ENCODE measurements at regions of chr9 and their contacts with region 1.

Region 1: DNA sequence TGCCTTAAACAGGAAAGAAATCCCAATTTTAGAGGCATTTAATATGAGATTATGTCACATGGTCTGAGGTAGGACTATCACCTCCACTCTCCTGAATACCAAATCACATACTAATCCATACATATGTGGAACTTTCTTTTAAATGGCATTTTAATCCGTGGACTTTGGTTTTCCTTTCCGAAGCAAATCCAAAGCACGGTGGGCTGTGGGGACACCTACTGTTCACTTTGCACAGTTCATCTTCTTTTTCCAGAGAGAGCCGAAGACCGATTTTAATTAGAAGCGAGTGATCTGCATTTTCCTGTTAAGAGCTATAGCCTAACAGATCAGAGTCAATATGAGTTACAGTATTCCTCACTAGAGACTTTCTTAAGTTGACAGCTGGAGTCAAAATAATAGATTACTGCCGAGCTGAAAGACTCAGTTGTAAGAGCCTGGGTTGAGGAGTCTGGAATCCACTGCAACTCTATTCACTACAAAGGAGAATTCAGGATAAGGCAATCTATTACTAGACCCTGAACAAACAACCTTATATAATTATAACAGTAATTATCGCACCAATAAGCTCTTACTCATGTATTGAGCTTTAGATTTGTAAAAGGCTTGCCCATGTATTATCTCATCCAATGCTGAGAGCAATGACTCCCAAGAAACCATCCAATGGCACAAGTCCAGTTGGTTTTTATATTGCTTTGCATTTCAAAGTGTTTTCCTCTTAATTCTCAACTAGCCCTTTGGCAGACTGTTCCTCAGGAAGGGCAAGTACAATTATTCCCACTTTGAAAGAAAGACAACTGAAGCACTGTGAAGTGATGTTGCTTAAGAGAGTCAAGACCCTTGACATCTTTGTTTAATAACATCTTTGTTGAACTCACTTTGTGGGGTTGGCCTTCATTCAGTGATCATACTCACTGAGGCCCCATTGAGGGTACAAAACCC is 144.7 kb downstream of the TRPM6 start:
- DNase-seq: no peak
- H3K4me3 ChIP-seq: no peak overlapping the region
- CTCF ChIP-seq: peak; percentile 56

Region 2: GRCh38 chr9:73200694-73201452 is 1542.2 kb before region 1 on chr9:
- CTCF ChIA-PET with region 1: interaction called, 29 read pairs
- POLR2A ChIA-PET with region 1: no interaction called
- DNase-seq: no peak
- H3K4me3 ChIP-seq: no peak overlapping the region
- CTCF ChIP-seq: peak; percentile 12

Region 3: GRCh38 chr9:74570879-74571512 is 172.1 kb before region 1 on chr9:
- CTCF ChIA-PET with region 1: interaction called, 10 read pairs
- POLR2A ChIA-PET with region 1: no interaction called
- DNase-seq: no peak
- H3K4me3 ChIP-seq: no peak overlapping the region
- CTCF ChIP-seq: peak; percentile 55

Region 4: DNA sequence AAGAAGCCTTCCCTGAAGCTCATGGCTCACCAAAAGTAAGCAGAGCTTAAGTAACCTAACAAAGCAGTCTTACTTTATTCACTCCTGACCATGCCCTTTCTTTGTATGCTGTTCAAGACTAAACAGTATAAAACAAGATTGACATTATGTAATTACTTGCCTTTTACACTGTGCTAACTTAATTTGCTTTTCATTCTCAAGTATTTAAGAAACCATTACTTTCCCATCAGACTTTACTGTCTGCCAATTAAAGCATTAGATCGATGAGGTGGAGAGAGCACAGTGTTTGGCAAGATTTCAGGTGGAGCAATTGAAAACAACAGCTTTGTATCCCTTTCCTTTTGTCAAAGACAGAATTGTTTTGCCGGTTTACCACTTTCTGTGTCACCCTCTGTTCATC is 147.8 kb before region 1 on chr9:
- CTCF ChIA-PET with region 1: no interaction called
- POLR2A ChIA-PET with region 1: no interaction called
- DNase-seq: no peak
- H3K4me3 ChIP-seq: no peak overlapping the region
- CTCF ChIP-seq: no peak

Region 5: DNA sequence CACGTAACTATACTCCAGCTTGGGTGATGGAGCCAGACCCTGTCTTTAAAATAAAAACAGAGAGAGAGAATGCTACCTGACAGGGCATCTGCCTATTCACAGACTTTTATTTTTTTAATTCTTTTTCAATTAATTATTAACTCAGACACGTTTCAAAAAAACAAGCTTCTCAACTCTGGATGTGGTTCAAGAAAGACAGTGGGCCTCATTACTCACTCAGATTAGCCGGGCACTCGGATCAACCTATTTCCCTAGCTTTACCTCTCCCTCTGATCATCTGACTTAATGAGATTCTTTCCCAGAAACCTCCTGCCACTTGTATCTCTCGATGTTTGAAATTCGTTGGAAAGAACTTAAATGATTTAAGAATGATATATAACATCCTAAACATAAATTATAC is 10.6 kb after region 1 on chr9:
- CTCF ChIA-PET with region 1: interaction called, 12 read pairs
- POLR2A ChIA-PET with region 1: no interaction called
- DNase-seq: no peak
- H3K4me3 ChIP-seq: no peak overlapping the region
- CTCF ChIP-seq: no peak

Measured in AG04449 (cell line).